ENCODE measurements at regions of chr14 and their contacts with region 1.

Region 1: GRCh38 chr14:75560962-75561432 is 17.4 kb upstream of the FLVCR2 start:
- DNase-seq: peak; percentile 83 to 92
- ATAC-seq: peak; percentile 71 to 77
- H3K4me3 ChIP-seq: no peak overlapping the region
- H3K27ac ChIP-seq: peak overlapping the region; percentile 73 to 89 (median 80)
- H3K4me1 ChIP-seq: peaks cover 40 to 52% of the 10 kb centered on the region in 2 donors
- H3K27me3 ChIP-seq: no peaks in the 10 kb centered on the region
- CTCF ChIP-seq: peak; percentile 79 to 87 (median 85)
- POLR2A ChIP-seq: no peak

Region 2: GRCh38 chr14:75340921-75341320 is 220.1 kb before region 1 on chr14:
- in situ Hi-C with region 1: no loop called
- intact Hi-C with region 1: loop called (anchors 5 kb)
- DNase-seq: peak; percentile 97 to 100
- ATAC-seq: peak; percentile 96 to 97
- H3K4me3 ChIP-seq: peak overlapping the region; percentile 33 to 42 (median 36)
- H3K27ac ChIP-seq: peak overlapping the region; percentile 94 to 97 (median 94)
- H3K4me1 ChIP-seq: peaks cover 40 to 42% of the 10 kb centered on the region in 2 donors
- H3K27me3 ChIP-seq: no peaks in the 10 kb centered on the region
- CTCF ChIP-seq: peak in 1 of 5 experiments; percentile 37
- POLR2A ChIP-seq: peak; percentile 84 to 93

Region 3: DNA sequence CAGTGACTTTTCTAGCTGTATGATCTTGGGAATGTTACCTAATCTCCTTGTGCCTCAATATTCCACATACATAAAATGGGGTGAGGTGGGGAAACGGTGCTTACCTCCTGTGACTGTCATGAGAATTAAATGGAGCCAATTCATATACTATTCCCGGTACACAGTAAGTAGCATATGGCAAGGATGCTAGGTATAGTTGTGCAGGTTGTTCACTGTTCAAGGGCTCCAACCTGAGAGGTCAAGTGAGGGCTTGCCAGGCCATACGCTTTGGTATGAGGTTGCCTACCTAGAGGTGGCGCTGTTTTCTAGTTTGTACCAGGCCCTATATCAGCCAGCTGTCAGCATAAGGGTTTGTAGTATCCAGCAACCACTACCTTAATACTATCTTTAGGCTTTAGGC is 42.4 kb before region 1 on chr14:
- in situ Hi-C with region 1: no loop called
- intact Hi-C with region 1: loop called (anchors 1 kb)
- DNase-seq: peak in 1 of 2 donors; percentile 62
- ATAC-seq: peak; percentile 73 to 83
- H3K4me3 ChIP-seq: no peak overlapping the region
- H3K27ac ChIP-seq: no peak overlapping the region
- H3K4me1 ChIP-seq: peaks cover 0 to 5% of the 10 kb centered on the region in 2 donors
- H3K27me3 ChIP-seq: no peaks in the 10 kb centered on the region
- CTCF ChIP-seq: peak; percentile 33 to 65 (median 50)
- POLR2A ChIP-seq: no peak

Region 4: DNA sequence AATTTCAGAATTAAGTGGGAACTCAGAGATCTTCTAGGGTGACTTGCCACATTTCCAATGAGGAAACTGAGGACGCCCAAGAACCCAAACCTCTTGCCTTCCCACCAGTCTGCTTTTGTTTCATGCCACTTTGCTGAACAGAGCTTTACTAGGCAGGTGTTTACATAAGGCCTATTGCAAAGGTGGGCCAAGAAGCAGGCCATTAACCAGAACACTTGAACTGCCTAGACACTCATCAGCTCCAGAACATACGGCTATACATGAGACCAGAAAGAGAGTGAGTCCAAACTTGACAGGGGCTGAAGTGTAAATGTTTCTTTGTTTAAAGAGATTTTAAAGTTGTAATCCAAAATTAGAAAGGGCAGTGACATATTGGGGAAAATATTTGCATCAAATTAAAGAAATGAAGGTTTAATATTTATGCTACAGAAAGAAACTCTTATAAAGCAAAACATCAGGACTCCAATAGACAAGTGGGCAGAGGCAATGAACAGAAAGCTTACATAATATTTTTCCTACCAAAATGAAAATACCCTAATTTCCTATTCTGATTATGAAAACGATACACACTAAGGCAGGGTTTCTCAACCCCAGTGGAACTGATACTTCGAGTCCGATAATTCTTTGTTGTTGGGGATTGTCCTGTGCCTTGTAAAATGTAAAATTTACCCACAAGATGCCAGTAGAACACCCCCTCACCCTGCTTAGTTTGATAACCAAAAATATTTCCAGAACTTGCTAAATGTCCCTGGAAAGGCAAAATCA is 27.0 kb before region 1 on chr14:
- in situ Hi-C with region 1: no loop called
- intact Hi-C with region 1: loop called (anchors 2 kb)
- DNase-seq: no peak
- ATAC-seq: no peak
- H3K4me3 ChIP-seq: no peak overlapping the region
- H3K27ac ChIP-seq: peak overlapping the region; percentile 86 to 97 (median 94)
- H3K4me1 ChIP-seq: peaks cover 21 to 28% of the 10 kb centered on the region in 2 donors
- H3K27me3 ChIP-seq: no peaks in the 10 kb centered on the region
- CTCF ChIP-seq: no peak
- POLR2A ChIP-seq: no peak

Region 5: GRCh38 chr14:76307786-76308780 is 747.1 kb after region 1 on chr14:
- in situ Hi-C with region 1: no loop called
- intact Hi-C with region 1: no loop called
- DNase-seq: no peak
- ATAC-seq: no peak
- H3K4me3 ChIP-seq: no peak overlapping the region
- H3K27ac ChIP-seq: no peak overlapping the region
- H3K4me1 ChIP-seq: peaks cover 15 to 24% of the 10 kb centered on the region in 2 donors
- H3K27me3 ChIP-seq: no peaks in the 10 kb centered on the region
- CTCF ChIP-seq: no peak
- POLR2A ChIP-seq: no peak